ENCODE measurements at regions of chr2 and their contacts with region 1.

Region 1: DNA sequence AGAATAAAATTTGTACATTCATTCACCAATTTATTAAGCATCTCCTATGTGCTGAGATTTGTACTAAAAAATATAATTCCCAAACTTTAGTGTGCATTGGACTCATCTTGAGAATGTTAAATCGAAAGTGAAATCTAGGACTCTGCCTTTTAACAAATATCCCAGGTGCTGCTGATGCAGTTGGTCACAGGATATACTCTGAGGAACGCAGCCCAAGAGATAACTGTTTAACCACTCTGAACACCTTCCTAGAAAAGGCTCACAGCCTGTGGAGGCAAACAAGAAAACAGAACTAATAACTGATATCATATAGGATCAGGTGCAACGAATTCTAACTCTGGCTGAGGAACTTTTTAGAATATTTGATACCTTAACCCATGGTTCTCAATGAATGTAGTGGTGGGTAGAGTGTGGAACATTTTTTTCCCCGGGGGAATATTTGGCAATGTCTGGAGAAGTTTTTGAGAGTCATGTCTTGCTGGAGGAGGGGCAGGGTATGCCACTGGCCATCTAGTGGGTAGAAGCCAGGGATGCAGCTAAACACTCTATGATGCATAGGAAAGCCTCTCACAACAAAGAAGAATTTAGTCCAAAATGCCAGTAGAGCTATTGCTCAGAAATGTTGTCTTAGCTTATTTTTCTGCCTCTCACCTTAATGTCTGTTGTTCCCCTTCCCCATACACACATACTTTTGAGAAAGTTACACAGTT is 96.5 kb downstream of the EHBP1 start:
- DNase-seq: no peak
- ATAC-seq: no peak
- H3K4me3 ChIP-seq: no peak overlapping the region
- H3K27ac ChIP-seq: no peak overlapping the region
- H3K4me1 ChIP-seq: peaks cover 0 to 5% (median 0%) of the 10 kb centered on the region in 9 donors
- H3K27me3 ChIP-seq: no peaks in the 10 kb centered on the region
- CTCF ChIP-seq: no peak

Region 2: DNA sequence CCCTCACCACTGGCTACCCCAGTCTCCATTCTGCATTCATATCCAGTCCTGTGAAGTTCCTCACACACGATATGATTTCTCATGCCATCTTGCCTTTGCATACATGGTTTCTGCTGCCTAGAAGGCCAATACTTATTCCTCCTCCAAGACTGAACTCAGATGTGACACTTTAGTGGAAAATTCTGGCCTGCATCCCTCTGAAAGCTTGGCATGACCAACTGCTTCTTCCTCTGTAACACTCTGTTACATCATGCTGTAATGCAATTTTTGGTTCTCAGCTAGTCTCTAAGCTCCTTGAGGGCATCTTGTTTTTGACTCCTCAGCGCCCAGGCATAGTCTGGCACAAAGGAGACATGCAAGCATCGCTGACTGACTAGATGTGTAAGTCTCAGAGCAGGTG is 960.7 kb before region 1 on chr2:
- intact Hi-C with region 1: no loop called
- DNase-seq: no peak
- ATAC-seq: no peak
- H3K4me3 ChIP-seq: no peak overlapping the region
- H3K27ac ChIP-seq: no peak overlapping the region
- H3K4me1 ChIP-seq: no peaks in the 10 kb centered on the region
- H3K27me3 ChIP-seq: no peaks in the 10 kb centered on the region
- CTCF ChIP-seq: no peak

Region 3: DNA sequence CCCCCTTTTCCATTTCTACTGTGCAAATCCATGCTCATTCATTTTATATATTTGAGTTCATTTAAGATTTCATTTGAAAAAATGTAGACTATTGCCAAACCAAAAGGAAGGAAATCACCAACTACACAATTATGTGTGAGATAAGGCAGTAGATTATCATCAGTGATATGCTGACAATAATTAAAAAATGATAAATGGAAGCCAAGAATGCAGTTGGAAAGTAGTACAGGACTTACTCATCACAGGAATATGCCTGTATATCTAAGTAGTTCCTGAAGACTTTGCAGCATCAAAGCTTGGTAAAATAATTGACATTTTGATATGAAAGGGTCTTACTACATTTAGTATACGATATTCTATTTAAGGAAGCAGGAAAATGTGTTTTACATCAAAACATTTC is 82.5 kb after region 1 on chr2:
- intact Hi-C with region 1: no loop called
- DNase-seq: no peak
- ATAC-seq: no peak
- H3K4me3 ChIP-seq: no peak overlapping the region
- H3K27ac ChIP-seq: no peak overlapping the region
- H3K4me1 ChIP-seq: peaks cover 0 to 8% (median 0%) of the 10 kb centered on the region in 9 donors
- H3K27me3 ChIP-seq: no peaks in the 10 kb centered on the region
- CTCF ChIP-seq: no peak

Region 4: GRCh38 chr2:62939735-62940491 is 137.9 kb after region 1 on chr2:
- intact Hi-C with region 1: loop called in 1 of 10 experiments (anchors 10 kb)
- DNase-seq: no peak
- ATAC-seq: no peak
- H3K4me3 ChIP-seq: no peak overlapping the region
- H3K27ac ChIP-seq: no peak overlapping the region
- H3K4me1 ChIP-seq: no peaks in the 10 kb centered on the region
- H3K27me3 ChIP-seq: no peaks in the 10 kb centered on the region
- CTCF ChIP-seq: no peak

Region 5: DNA sequence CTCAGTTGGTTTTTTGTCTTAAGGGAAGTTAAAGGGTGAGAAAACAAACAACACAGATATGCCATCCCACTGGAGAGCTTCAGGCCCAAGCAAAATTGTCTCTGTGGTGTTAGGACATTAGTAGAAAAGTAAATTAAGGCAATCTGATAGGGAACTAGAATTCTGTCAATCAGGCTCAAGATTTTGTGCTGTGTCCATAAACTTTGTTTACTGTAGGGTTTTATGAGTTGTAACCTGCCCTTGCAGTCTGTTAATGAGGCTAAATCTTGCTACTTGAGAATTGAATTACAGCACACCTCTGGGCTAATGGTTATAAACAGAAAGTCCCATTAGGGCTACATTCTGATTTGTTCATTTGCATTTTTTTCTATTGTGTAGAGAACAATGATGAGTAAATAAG is 170.6 kb after region 1 on chr2:
- intact Hi-C with region 1: no loop called
- DNase-seq: no peak
- ATAC-seq: no peak
- H3K4me3 ChIP-seq: no peak overlapping the region
- H3K27ac ChIP-seq: no peak overlapping the region
- H3K4me1 ChIP-seq: no peaks in the 10 kb centered on the region
- H3K27me3 ChIP-seq: no peaks in the 10 kb centered on the region
- CTCF ChIP-seq: no peak